Prostate gland (tissue), 2 donors: ENCODE measurements at regions of chr16 and their contacts with region 1.

Region 1: GRCh38 chr16:81366316-81366932 is 51.7 kb downstream of the GAN start:
- DNase-seq: peak; percentile 19
- H3K4me3 ChIP-seq: no peak overlapping the region
- H3K27ac ChIP-seq: no peak overlapping the region
- H3K4me1 ChIP-seq: no peaks in the 10 kb centered on the region
- H3K27me3 ChIP-seq: no peaks in the 10 kb centered on the region
- CTCF ChIP-seq: peak; percentile 54 to 91 (median 71)
- POLR2A ChIP-seq: no peak

Region 2: GRCh38 chr16:81623363-81624102 is 257.1 kb after region 1 on chr16:
- intact Hi-C with region 1: loop called (anchors 10 kb)
- DNase-seq: peak; percentile 54
- H3K4me3 ChIP-seq: no peak overlapping the region
- H3K27ac ChIP-seq: no peak overlapping the region
- H3K4me1 ChIP-seq: peaks cover 5% of the 10 kb centered on the region
- H3K27me3 ChIP-seq: no peaks in the 10 kb centered on the region
- CTCF ChIP-seq: peak in 3 of 4 experiments; percentile 69 to 79 (median 77)
- POLR2A ChIP-seq: no peak